ENCODE measurements at regions of chr6 and their contacts with region 1.

Region 1: GRCh38 chr6:105484238-105485161 is 81.6 kb upstream of the PREP start:
- DNase-seq: no peak

Region 2: DNA sequence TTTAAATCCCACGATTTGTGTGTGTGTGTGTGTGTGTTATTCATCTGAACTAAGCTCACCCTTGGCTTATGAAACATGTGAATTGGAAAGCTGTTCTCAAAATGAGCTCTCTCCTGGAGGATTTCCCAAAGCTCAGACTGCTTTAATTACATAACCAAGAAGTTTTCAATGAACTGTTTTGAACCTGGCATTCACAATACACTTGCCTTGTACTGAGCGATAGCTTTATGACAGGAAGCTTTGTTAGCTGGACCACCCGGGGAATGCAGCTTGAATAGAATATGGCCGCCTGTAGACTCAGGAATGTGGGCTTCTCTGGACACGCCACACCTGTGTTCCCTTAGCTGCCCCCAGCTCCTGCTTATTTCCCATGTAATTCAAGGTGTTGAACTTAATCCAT is 10.3 kb before region 1 on chr6:
- intact Hi-C with region 1: no loop called
- DNase-seq: no peak

Region 3: GRCh38 chr6:105495515-105495914 is 11.0 kb after region 1 on chr6:
- intact Hi-C with region 1: no loop called
- DNase-seq: no peak

Region 4: DNA sequence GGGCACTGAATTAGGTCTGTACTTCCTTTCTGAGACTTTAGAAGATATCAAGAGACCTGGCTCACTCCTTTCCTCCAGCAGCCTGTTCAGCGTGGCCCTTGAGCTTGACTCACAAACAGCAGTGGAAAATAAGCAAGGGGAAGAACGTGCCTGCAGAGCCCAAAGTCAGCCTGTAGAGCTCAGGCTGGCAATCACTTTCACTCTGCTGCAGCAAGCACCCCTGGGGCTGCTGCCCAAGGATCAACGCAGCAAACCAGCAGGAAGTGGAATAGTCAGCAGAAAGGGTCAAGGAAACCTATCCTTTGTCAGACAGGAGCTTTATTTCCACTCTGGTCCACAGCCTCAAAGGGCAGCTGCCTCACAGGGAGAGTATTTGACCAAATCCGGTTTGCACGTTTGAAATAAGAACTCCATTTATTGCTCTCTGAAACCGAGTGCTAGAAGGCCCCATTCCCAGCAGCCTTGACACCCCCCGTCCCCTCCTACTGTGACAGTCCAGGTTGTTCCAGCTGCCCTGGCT is 679.0 kb after region 1 on chr6:
- intact Hi-C with region 1: no loop called
- DNase-seq: no peak

Region 5: GRCh38 chr6:106309766-106310373 is 825.4 kb after region 1 on chr6:
- intact Hi-C with region 1: loop called in 1 of 2 experiments (anchors 10 kb)
- DNase-seq: no peak